ENCODE measurements at regions of chr13 and their contacts with region 1.

Region 1: GRCh38 chr13:112669881-112670499 is 19.8 kb upstream of the ATP11A start:
- DNase-seq: no peak
- H3K4me3 ChIP-seq: no peak overlapping the region
- H3K27ac ChIP-seq: no peak overlapping the region
- H3K4me1 ChIP-seq: peaks cover 0 to 3% (median 0%) of the 10 kb centered on the region in 4 donors
- H3K27me3 ChIP-seq: no peaks in the 10 kb centered on the region
- CTCF ChIP-seq: no peak
- EP300 ChIP-seq: no peak
- POLR2A ChIP-seq: no peak

Region 2: GRCh38 chr13:111370570-111371535 is 1299.1 kb before region 1 on chr13:
- in situ Hi-C with region 1: no loop called
- intact Hi-C with region 1: loop called (anchors 5 kb)
- DNase-seq: no peak
- H3K4me3 ChIP-seq: no peak overlapping the region
- H3K27ac ChIP-seq: no peak overlapping the region
- H3K4me1 ChIP-seq: no peaks in the 10 kb centered on the region
- H3K27me3 ChIP-seq: no peaks in the 10 kb centered on the region
- CTCF ChIP-seq: no peak
- EP300 ChIP-seq: no peak
- POLR2A ChIP-seq: no peak

Region 3: GRCh38 chr13:113044391-113045114 is 374.6 kb after region 1 on chr13:
- in situ Hi-C with region 1: no loop called
- intact Hi-C with region 1: no loop called
- DNase-seq: no peak
- H3K4me3 ChIP-seq: no peak overlapping the region
- H3K27ac ChIP-seq: no peak overlapping the region
- H3K4me1 ChIP-seq: no peaks in the 10 kb centered on the region
- H3K27me3 ChIP-seq: no peaks in the 10 kb centered on the region
- CTCF ChIP-seq: no peak
- EP300 ChIP-seq: no peak
- POLR2A ChIP-seq: no peak